Activated CD4-positive, alpha-beta T cell treated with anti-CD3 and anti-CD28 coated beads, Interleukin-2, amount 10 ng/mL, durations not matched to agents 24 days and 14 days (primary cell): ENCODE measurements at regions of chr6 and their contacts with region 1.

Region 1: GRCh38 chr6:34791701-34792235 is at the start of gene BLTP3A:
- DNase-seq: peak; percentile 94
- H3K4me3 Mint-ChIP-seq: peak within 1 kb of the TSS; percentile 97
- H3K27ac Mint-ChIP-seq: peak within 1 kb of the TSS; percentile 93
- H3K4me1 Mint-ChIP-seq: peaks cover 22% of the 10 kb centered on the region
- H3K27me3 Mint-ChIP-seq: no peaks in the 10 kb centered on the region
- total RNA-seq, gene BLTP3A: 17.0 and 18.3 TPM in 2 replicates

Region 2: GRCh38 chr6:34757687-34758274 is 34.0 kb before region 1 on chr6:
- intact Hi-C with region 1: loop called (anchors 1 kb)
- DNase-seq: no peak
- H3K4me3 Mint-ChIP-seq: no peak overlapping the region
- H3K27ac Mint-ChIP-seq: no peak overlapping the region
- H3K4me1 Mint-ChIP-seq: peaks cover 7% of the 10 kb centered on the region
- H3K27me3 Mint-ChIP-seq: no peaks in the 10 kb centered on the region